Heart left ventricle (tissue), 16 donors: ENCODE measurements at regions of chr10 and their contacts with region 1.

Region 1: GRCh38 chr10:71285180-71285545 is 33.9 kb upstream of the SLC29A3 start:
- DNase-seq: peak in 2 of 5 donors; percentile 45 to 58
- ATAC-seq: peak in 3 of 4 donors; percentile 64 to 71 (median 69)
- H3K4me3 ChIP-seq: no peak overlapping the region
- H3K27ac ChIP-seq: no peak overlapping the region
- H3K4me1 ChIP-seq: peaks cover 0 to 9% (median 3%) of the 10 kb centered on the region in 12 donors
- H3K27me3 ChIP-seq: no peaks in the 10 kb centered on the region
- CTCF ChIP-seq: peak; percentile 56 to 85 (median 76)
- POLR2A ChIP-seq: no peak

Region 2: GRCh38 chr10:70903262-70903921 is 381.8 kb before region 1 on chr10:
- intact Hi-C with region 1: loop called in 8 of 10 experiments (anchors 1 to 5 kb)
- DNase-seq: peak in 4 of 5 donors; percentile 68 to 79 (median 70)
- ATAC-seq: peak; percentile 61 to 72 (median 64)
- H3K4me3 ChIP-seq: no peak overlapping the region
- H3K27ac ChIP-seq: no peak overlapping the region
- H3K4me1 ChIP-seq: peaks cover 0 to 24% (median 9%) of the 10 kb centered on the region in 12 donors
- H3K27me3 ChIP-seq: no peaks in the 10 kb centered on the region
- CTCF ChIP-seq: peak; percentile 84 to 95 (median 91)
- POLR2A ChIP-seq: no peak

Region 3: DNA sequence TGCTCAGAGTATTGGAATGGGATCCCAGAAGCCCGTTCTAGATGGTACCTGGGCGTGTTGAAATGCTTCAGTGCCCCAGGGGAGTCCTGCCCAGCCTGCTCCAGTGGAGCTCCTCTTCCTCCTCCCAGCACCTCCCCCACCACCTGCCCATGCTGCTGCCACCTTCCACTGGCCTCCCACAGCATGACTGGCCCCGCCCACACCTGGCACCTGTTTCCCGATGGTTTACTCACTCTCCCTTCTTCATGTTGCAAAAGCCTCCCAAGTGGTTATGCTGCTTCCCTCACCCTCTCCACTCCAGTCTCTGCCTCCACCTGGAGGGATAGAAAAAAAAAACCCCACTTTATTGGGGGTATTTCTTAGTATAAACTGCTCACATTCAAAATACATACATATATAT is 364.6 kb before region 1 on chr10:
- intact Hi-C with region 1: loop called (anchors 1 to 5 kb)
- DNase-seq: peak in 1 of 5 donors; percentile 26
- ATAC-seq: no peak
- H3K4me3 ChIP-seq: no peak overlapping the region
- H3K27ac ChIP-seq: no peak overlapping the region
- H3K4me1 ChIP-seq: peaks cover 0 to 2% (median 0%) of the 10 kb centered on the region in 12 donors
- H3K27me3 ChIP-seq: peaks cover 0 to 19% (median 2%) of the 10 kb centered on the region in 9 donors
- CTCF ChIP-seq: no peak
- POLR2A ChIP-seq: no peak

Region 4: GRCh38 chr10:70925377-70926225 is 359.6 kb before region 1 on chr10:
- intact Hi-C with region 1: loop called (anchors 1 to 5 kb)
- DNase-seq: peak in 2 of 5 donors; percentile 44 to 61
- ATAC-seq: peak; percentile 66 to 85 (median 76)
- H3K4me3 ChIP-seq: no peak overlapping the region
- H3K27ac ChIP-seq: peak overlapping the region in 3 of 12 donors; percentile 12 to 36 (median 19)
- H3K4me1 ChIP-seq: peaks cover 0 to 11% (median 0%) of the 10 kb centered on the region in 12 donors
- H3K27me3 ChIP-seq: peaks cover 0 to 4% (median 0%) of the 10 kb centered on the region in 9 donors
- CTCF ChIP-seq: peak; percentile 87 to 99 (median 96)
- POLR2A ChIP-seq: no peak

Region 5: GRCh38 chr10:71015674-71016073 is 269.5 kb before region 1 on chr10:
- intact Hi-C with region 1: loop called in 1 of 10 experiments (anchors 10 kb)
- DNase-seq: no peak
- ATAC-seq: no peak
- H3K4me3 ChIP-seq: no peak overlapping the region
- H3K27ac ChIP-seq: no peak overlapping the region
- H3K4me1 ChIP-seq: peaks cover 0 to 11% (median 3%) of the 10 kb centered on the region in 12 donors
- H3K27me3 ChIP-seq: no peaks in the 10 kb centered on the region
- CTCF ChIP-seq: no peak
- POLR2A ChIP-seq: no peak

Region 6: DNA sequence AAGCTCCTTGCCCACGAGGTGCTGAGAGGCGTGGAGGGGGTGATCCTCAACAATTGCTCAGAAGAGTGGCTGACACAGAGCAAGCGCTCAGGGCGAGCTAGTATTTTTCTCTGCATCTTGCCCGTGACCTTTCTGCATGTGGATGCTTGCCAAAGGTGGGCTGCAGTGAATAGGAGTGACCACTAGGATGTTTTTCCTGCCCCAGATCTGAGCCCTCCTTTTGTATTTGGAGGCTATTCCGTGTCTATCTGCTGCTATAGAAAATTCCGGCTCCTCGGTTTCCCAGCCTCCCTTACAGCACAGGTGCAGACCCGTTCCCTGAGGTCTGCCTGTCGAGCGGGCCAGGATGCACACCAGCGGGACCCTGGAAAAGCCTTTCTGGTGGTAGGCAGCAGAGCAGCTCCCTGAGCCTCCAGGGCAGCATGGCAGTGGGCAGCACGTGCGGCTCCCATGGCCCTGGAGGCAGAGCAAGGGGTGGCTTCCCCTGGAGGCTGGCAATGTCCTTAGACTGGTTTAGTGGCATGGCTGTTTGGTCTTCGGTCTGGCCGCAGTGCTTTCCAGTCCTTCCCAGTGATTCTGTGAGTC is 251.7 kb before region 1 on chr10:
- intact Hi-C with region 1: no loop called
- DNase-seq: no peak
- ATAC-seq: no peak
- H3K4me3 ChIP-seq: no peak overlapping the region
- H3K27ac ChIP-seq: no peak overlapping the region
- H3K4me1 ChIP-seq: peaks cover 0 to 14% (median 0%) of the 10 kb centered on the region in 12 donors
- H3K27me3 ChIP-seq: peaks cover 0 to 6% (median 0%) of the 10 kb centered on the region in 9 donors
- CTCF ChIP-seq: peak in 1 of 12 donors; percentile 14
- POLR2A ChIP-seq: no peak